ENCODE measurements at regions of chr1 and their contacts with region 1.

Region 1: GRCh38 chr1:47388891-47389238 is 27.2 kb upstream of the FOXE3 start:
- DNase-seq: peak; percentile 69
- H3K4me3 ChIP-seq: no peak overlapping the region
- H3K27ac ChIP-seq: no peak overlapping the region
- H3K4me1 ChIP-seq: peaks cover 10% of the 10 kb centered on the region
- CTCF ChIP-seq: peak; percentile 93

Region 2: DNA sequence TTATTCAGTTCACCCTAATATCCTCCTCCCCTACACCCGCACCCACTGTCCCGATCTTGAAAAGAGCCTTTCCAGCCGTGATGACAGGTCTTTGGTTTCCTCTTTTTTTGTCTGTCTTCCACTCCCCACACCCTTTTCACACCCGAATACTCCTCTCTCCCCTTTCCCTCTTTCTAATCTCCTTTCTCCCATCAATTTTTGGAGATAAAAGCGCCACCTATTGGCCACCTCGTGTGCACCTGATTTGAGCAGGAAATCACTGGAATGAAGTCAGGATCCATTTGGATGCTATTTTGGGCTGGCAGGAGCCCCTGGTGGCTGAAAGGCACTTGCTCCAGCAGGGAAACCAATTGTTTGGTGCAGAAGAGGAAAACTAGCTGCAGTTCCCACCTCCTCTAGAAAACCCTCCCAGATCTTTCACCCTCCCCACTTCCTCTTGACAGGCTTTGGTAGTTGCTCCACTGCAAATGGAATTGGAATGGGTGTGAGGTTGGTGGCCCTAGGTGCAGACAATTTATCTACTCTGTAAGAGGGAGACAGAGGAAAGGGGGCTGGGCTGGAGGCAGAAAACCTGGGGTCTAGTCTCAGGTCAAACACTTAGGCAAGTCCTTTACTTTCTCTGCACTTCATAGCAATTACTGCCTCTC is 35.6 kb after region 1 on chr1:
- CTCF ChIA-PET with region 1: no interaction called
- POLR2A ChIA-PET with region 1: interaction called, 4 read pairs
- intact Hi-C with region 1: loop called (anchors 1 kb)
- DNase-seq: peak; percentile 41
- H3K4me3 ChIP-seq: no peak overlapping the region
- H3K27ac ChIP-seq: no peak overlapping the region
- H3K4me1 ChIP-seq: no peaks in the 10 kb centered on the region
- CTCF ChIP-seq: peak; percentile 93

Region 3: DNA sequence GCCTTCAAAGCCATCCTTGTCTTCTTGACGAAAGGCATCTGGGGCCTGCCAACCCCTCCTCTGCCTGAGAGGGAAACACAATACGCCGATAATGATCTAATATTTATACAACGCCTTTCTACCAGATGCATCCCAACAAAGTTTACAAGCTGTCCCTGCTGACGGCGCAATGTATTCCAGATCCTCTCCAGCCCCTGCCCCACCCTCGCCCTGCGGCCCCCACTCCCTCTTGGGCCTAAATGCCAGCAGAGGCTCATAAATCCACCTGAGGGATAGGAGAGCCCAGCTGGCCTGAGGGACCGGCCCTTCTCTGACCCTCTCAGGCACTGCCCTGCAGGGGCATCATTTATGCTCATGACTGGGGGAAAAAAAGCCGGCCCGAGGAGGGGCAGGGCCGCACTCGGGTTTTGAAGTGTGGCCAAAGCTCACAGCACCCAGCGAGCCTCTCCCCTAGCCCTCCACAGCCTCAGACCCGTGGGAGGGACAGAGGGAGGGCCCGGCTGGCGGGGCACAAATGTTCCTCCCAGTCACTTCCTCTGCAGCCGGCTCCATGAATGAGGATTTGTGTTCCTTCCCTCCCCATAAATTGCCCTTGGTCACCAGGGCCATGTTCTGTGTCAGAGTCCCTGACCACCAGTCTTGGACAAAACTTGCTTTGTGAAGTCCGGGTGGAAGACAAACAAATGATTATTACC is 189.3 kb after region 1 on chr1:
- CTCF ChIA-PET with region 1: no interaction called
- POLR2A ChIA-PET with region 1: no interaction called
- intact Hi-C with region 1: no loop called
- DNase-seq: no peak
- H3K4me3 ChIP-seq: no peak overlapping the region
- H3K27ac ChIP-seq: no peak overlapping the region
- H3K4me1 ChIP-seq: no peaks in the 10 kb centered on the region
- CTCF ChIP-seq: no peak

Region 4: DNA sequence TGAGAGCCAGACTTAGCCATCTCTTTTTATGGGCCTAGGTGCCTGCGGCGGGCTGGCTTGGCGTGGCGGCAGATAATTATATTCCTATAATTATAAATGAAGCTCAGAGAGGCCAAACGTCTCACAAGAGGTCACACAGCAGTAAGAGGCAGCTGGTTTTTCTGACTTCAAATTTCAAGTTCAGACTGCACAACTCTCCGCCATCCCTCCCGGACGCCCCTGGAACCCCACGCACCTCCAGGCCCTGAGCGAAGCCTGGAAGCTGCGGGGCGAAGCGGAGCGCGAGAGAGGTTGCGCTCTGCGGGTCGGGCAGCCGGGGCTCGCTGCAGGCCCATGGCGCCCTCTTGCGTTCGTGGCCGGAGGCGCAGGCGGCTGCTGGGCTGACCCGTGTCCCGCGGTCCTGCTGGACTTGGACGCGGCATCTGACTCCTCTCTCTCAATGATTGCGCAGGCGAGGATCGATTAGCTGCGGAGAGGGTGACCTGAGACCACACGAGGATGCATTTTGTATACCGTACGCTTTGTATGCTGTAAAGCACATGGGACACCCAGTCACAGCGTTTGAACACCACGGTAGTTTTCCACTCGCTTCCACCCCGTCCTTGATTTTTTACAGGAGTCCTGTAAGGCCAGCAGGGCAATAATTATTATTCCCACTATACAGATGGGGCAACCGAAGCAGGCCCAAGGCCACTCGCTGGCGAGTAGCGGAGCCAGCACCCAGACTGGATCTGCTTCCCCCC is 321.6 kb after region 1 on chr1:
- CTCF ChIA-PET with region 1: no interaction called
- POLR2A ChIA-PET with region 1: no interaction called
- intact Hi-C with region 1: loop called (anchors 5 kb)
- DNase-seq: peak; percentile 38
- H3K4me3 ChIP-seq: no peak overlapping the region
- H3K27ac ChIP-seq: no peak overlapping the region
- H3K4me1 ChIP-seq: no peaks in the 10 kb centered on the region
- CTCF ChIP-seq: peak; percentile 87

Region 5: DNA sequence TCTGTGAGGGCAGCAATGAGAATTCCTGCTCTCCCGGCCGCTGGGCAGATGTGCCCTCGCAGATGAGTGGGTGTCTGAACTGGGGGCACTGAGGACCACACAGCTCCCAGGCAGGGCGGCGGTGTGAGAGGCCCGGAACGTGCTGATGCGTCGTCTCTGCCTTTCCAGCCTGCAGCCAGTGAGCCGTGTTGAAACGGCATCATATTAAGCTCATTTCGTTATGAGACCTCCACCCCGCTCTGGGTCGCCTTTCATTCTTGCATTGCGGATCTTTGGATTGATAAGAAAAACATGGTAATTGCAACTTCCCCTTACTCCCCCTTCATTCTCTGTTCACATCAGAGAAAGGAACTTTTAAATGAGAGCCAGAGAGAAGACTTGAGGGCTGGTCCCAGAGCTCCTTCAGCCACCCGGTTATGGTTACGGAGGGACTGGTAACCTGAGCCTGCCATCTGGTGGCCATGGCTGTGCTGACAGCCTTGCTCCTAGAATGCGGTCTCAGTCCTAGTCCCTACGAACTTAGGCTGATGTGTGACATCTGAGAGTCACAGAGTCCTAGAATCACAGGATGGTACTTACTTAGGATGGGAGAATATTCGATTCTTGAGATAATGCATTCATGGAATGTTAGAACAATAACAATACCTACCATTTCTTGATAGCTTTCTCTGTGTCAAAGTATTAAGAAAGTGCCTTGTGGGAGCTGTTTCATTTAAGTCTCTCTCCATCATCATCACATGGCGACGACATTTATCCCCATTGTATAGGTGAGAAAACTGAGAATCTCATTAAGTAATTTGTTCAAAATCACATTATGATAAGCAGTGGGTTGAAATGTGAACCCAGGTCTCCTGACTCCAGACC is 337.4 kb after region 1 on chr1:
- CTCF ChIA-PET with region 1: interaction called, 8 read pairs
- POLR2A ChIA-PET with region 1: interaction called, 3 read pairs
- intact Hi-C with region 1: loop called (anchors 2 kb)
- DNase-seq: peak; percentile 72
- H3K4me3 ChIP-seq: no peak overlapping the region
- H3K27ac ChIP-seq: no peak overlapping the region
- H3K4me1 ChIP-seq: peaks cover 11% of the 10 kb centered on the region
- CTCF ChIP-seq: peak; percentile 87

Measured in OCI-LY7 (cell line).